Endothelial cell of umbilical vein (primary cell): ENCODE measurements at regions of chr5 and their contacts with region 1.

Region 1: GRCh38 chr5:34639852-34640605 is 16.1 kb upstream of the RAI14 start:
- DNase-seq: no peak
- H3K4me3 ChIP-seq: no peak overlapping the region
- H3K27ac ChIP-seq: no peak overlapping the region
- H3K4me1 ChIP-seq: no peaks in the 10 kb centered on the region
- H3K27me3 ChIP-seq: no peaks in the 10 kb centered on the region
- CTCF ChIP-seq: no peak
- POLR2A ChIP-seq: no peak

Region 2: DNA sequence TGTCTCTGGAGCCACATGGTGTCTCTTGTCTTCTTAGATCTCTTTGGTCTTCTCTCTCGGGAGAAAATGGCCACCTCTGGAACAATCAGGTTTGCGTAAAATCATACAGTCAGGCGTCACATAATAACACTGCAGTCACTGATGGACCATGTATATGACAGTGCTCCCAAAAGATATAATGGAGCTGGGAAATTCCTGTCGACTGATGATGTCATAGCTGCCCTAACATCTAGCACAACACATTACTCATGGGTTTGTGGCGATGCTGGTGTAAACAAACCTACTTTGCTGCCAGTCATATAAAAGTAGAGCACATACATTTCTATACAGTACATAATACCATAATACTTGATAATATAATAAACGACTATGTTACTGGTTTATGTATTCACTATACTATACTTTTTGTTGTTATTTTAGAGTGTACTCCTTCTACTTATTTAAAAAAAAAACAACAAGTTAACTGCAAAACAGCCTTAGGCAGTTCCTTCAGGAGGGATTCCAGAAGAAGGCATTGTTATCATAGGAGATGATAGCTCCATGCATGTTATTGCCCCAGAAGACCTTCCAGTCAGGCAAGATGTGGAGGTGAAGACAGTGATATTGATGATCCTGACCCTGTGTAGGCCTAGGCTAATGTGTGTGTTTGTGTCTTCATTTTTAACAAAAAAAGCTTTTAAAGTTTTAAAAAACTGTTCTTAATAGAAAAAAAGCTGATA is 13.8 kb before region 1 on chr5:
- CTCF ChIA-PET with region 1: no interaction called
- POLR2A ChIA-PET with region 1: interaction called, 12 read pairs
- dilution Hi-C with region 1: no loop called
- intact Hi-C with region 1: no loop called
- DNase-seq: peak; percentile 88
- H3K4me3 ChIP-seq: no peak overlapping the region
- H3K27ac ChIP-seq: peak overlapping the region; percentile 78
- H3K4me1 ChIP-seq: peaks cover 44% of the 10 kb centered on the region
- H3K27me3 ChIP-seq: no peaks in the 10 kb centered on the region
- CTCF ChIP-seq: no peak
- POLR2A ChIP-seq: no peak